ENCODE measurements at regions of chr2 and their contacts with region 1.

Region 1: GRCh38 chr2:8408560-8409460 is 273.0 kb upstream of the ID2 start:
- DNase-seq: peak; percentile 73
- CTCF ChIP-seq: no peak

Region 2: GRCh38 chr2:8389373-8390108 is 19.3 kb before region 1 on chr2:
- CTCF ChIA-PET with region 1: interaction called, 21 read pairs
- POLR2A ChIA-PET with region 1: no interaction called
- DNase-seq: no peak
- CTCF ChIP-seq: no peak

Region 3: DNA sequence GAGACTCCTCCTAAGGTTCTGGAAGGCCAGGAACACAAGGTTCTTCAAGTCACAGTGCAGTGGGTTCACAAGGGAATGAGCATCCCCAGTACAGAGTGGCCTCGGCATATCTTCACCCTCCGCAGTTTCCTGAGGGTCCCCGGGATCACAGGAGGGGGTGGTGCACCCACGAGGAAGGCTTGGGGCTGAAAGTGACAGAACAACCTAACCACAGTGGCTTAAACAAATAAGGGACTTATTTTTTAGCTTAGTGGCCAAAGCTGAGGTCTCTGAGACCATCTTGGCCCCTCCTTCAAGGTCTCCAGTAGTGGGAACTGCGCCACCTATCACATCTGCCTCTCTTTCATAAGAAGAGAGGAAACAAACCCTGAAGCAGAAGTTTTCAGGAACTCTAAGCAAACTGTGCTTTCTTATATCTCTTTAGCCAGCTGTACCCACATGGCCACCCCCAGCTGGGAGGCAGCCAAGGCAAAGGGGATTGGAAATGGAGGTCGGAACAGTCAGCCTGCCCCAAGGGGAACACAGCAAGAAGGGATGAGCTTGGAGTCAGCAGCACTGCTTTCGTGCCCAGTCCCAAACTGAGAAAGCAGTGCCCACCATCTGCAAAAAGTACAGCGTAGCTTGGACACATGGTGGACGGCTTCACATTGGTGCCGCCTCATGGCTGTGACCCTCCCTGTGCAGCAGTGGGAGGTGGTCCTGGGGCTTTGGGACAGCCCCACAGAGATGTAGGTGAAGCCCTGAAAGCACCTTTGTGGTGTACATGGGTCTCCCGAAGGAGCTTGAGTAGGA is 13.0 kb after region 1 on chr2:
- CTCF ChIA-PET with region 1: interaction called, 32 read pairs
- POLR2A ChIA-PET with region 1: interaction called, 3 read pairs
- DNase-seq: peak; percentile 66
- CTCF ChIP-seq: peak; percentile 43

Region 4: DNA sequence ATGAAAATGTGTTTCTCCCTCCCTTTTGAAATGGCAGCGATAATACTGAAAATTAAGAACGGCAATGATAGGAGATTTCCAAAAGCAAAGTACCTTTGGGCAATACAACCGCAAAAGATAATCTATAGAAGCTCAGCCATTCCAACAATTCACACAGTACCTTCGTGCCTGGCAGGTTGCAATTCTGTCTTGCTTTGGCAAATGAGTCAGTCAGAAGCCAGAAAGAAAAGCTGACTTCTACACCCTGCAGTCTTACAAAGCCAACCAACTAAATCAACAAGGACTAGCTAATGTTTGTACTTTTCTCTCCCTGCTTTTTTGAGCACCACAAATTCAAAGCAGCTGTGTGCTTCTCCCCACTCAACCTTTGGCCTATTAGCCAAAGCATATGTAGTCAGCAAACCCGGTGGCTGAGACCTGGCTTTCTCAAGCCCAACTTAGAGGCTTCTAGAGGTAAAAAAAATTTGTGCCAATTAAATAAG is 247.4 kb after region 1 on chr2:
- CTCF ChIA-PET with region 1: no interaction called
- POLR2A ChIA-PET with region 1: no interaction called
- DNase-seq: no peak
- CTCF ChIP-seq: no peak